ENCODE measurements at regions of chr5 and their contacts with region 1.

Region 1: GRCh38 chr5:169710675-169711074 is 73.6 kb downstream of the DOCK2 start:
- DNase-seq: no peak
- H3K4me3 ChIP-seq: no peak overlapping the region
- H3K27ac ChIP-seq: no peak overlapping the region
- H3K4me1 ChIP-seq: no peaks in the 10 kb centered on the region
- H3K27me3 ChIP-seq: no peaks in the 10 kb centered on the region
- CTCF ChIP-seq: no peak
- POLR2A ChIP-seq: no peak

Region 2: GRCh38 chr5:168066536-168067208 is 1644.0 kb before region 1 on chr5:
- intact Hi-C with region 1: loop called (anchors 5 kb)
- DNase-seq: no peak
- H3K4me3 ChIP-seq: no peak overlapping the region
- H3K27ac ChIP-seq: no peak overlapping the region
- H3K4me1 ChIP-seq: no peaks in the 10 kb centered on the region
- H3K27me3 ChIP-seq: no peaks in the 10 kb centered on the region
- CTCF ChIP-seq: no peak
- POLR2A ChIP-seq: no peak